ENCODE measurements at regions of chr6 and their contacts with region 1.

Region 1: GRCh38 chr6:87799651-87800050 is 97.6 kb upstream of the AKIRIN2 start:
- DNase-seq: no peak
- ATAC-seq: no peak
- H3K4me3 ChIP-seq: no peak overlapping the region
- H3K27ac ChIP-seq: no peak overlapping the region
- H3K4me1 ChIP-seq: no peaks in the 10 kb centered on the region
- H3K27me3 ChIP-seq: no peaks in the 10 kb centered on the region
- CTCF ChIP-seq: no peak

Region 2: GRCh38 chr6:87731818-87732661 is 67.6 kb before region 1 on chr6:
- intact Hi-C with region 1: loop called in 1 of 2 experiments (anchors 5 kb)
- DNase-seq: peak; percentile 95 to 96
- ATAC-seq: peak; percentile 81 to 90 (median 87)
- H3K4me3 ChIP-seq: peak overlapping the region; percentile 24
- H3K27ac ChIP-seq: peak overlapping the region; percentile 90
- H3K4me1 ChIP-seq: peaks cover 43% of the 10 kb centered on the region
- H3K27me3 ChIP-seq: no peaks in the 10 kb centered on the region
- CTCF ChIP-seq: no peak

Region 3: GRCh38 chr6:87742106-87742505 is 57.5 kb before region 1 on chr6:
- intact Hi-C with region 1: loop called in 1 of 2 experiments (anchors 5 kb)
- DNase-seq: no peak
- ATAC-seq: no peak
- H3K4me3 ChIP-seq: no peak overlapping the region
- H3K27ac ChIP-seq: no peak overlapping the region
- H3K4me1 ChIP-seq: no peaks in the 10 kb centered on the region
- H3K27me3 ChIP-seq: no peaks in the 10 kb centered on the region
- CTCF ChIP-seq: no peak

Region 4: GRCh38 chr6:87756858-87757257 is 42.8 kb before region 1 on chr6:
- intact Hi-C with region 1: no loop called
- DNase-seq: no peak
- ATAC-seq: peak in 3 of 4 donors; percentile 15 to 30 (median 27)
- H3K4me3 ChIP-seq: no peak overlapping the region
- H3K27ac ChIP-seq: no peak overlapping the region
- H3K4me1 ChIP-seq: no peaks in the 10 kb centered on the region
- H3K27me3 ChIP-seq: no peaks in the 10 kb centered on the region
- CTCF ChIP-seq: no peak

Measured in psoas muscle (tissue), 8 donors.